Esophagus muscularis mucosa (tissue), 4 donors: ENCODE measurements at regions of chr7 and their contacts with region 1.

Region 1: GRCh38 chr7:134782121-134782623 is 2.7 kb downstream of the CALD1 start:
- DNase-seq: peak; percentile 50
- H3K4me3 ChIP-seq: peak overlapping the region; percentile 51 to 70 (median 62)
- H3K27ac ChIP-seq: peak overlapping the region; percentile 89 to 95 (median 92)
- H3K4me1 ChIP-seq: peaks cover 37 to 56% (median 44%) of the 10 kb centered on the region in 4 donors
- H3K27me3 ChIP-seq: no peaks in the 10 kb centered on the region
- CTCF ChIP-seq: no peak
- EP300 ChIP-seq: no peak
- POLR2A ChIP-seq: no peak

Region 2: DNA sequence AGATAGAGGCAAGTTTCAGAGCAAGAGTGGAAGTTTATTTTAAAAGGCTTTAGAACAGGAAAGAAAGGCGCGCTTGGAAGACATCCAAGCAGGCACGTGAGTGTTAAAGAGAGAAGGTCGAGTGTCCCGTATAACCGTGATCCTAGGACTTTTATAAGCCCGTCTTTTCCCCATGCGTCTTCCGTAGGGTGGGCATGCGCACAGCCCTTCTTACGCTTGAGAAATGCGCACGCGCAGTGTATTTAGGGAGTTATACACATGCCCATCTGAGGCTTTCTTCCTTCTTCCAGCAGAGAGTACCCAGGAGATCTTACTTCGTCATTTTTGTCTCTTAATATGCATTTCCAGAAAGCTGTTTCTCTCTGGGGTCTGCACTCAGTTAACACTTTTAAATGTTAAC is 49.7 kb after region 1 on chr7:
- intact Hi-C with region 1: loop called (anchors 5 kb)
- DNase-seq: no peak
- H3K4me3 ChIP-seq: peak overlapping the region; percentile 19 to 29 (median 25)
- H3K27ac ChIP-seq: peak overlapping the region; percentile 73 to 87 (median 82)
- H3K4me1 ChIP-seq: peaks cover 49 to 99% (median 91%) of the 10 kb centered on the region in 4 donors
- H3K27me3 ChIP-seq: no peaks in the 10 kb centered on the region
- CTCF ChIP-seq: no peak
- EP300 ChIP-seq: no peak
- POLR2A ChIP-seq: no peak

Region 3: GRCh38 chr7:134854816-134855215 is 72.6 kb after region 1 on chr7:
- intact Hi-C with region 1: no loop called
- DNase-seq: no peak
- H3K4me3 ChIP-seq: no peak overlapping the region
- H3K27ac ChIP-seq: peak overlapping the region; percentile 67 to 87 (median 76)
- H3K4me1 ChIP-seq: peaks cover 55 to 97% (median 95%) of the 10 kb centered on the region in 4 donors
- H3K27me3 ChIP-seq: no peaks in the 10 kb centered on the region
- CTCF ChIP-seq: no peak
- EP300 ChIP-seq: no peak
- POLR2A ChIP-seq: no peak

Region 4: GRCh38 chr7:134865001-134865845 is 83.1 kb after region 1 on chr7:
- intact Hi-C with region 1: no loop called
- DNase-seq: no peak
- H3K4me3 ChIP-seq: peak overlapping the region; percentile 28 to 49 (median 35)
- H3K27ac ChIP-seq: peak overlapping the region; percentile 73 to 87 (median 79)
- H3K4me1 ChIP-seq: peaks cover 40 to 99% (median 98%) of the 10 kb centered on the region in 4 donors
- H3K27me3 ChIP-seq: no peaks in the 10 kb centered on the region
- CTCF ChIP-seq: no peak
- EP300 ChIP-seq: no peak
- POLR2A ChIP-seq: no peak

Region 5: GRCh38 chr7:134932707-134933370 is 150.7 kb after region 1 on chr7:
- intact Hi-C with region 1: loop called (anchors 10 kb)
- DNase-seq: peak; percentile 92
- H3K4me3 ChIP-seq: peak overlapping the region in 3 of 4 donors; percentile 12 to 27 (median 15)
- H3K27ac ChIP-seq: peak overlapping the region; percentile 82 to 89 (median 84)
- H3K4me1 ChIP-seq: peaks cover 45 to 90% (median 82%) of the 10 kb centered on the region in 4 donors
- H3K27me3 ChIP-seq: no peaks in the 10 kb centered on the region
- CTCF ChIP-seq: no peak
- EP300 ChIP-seq: peak; percentile 87
- POLR2A ChIP-seq: no peak